Ascending aorta (tissue), 2 donors: ENCODE measurements at regions of chr1 and their contacts with region 1.

Region 1: DNA sequence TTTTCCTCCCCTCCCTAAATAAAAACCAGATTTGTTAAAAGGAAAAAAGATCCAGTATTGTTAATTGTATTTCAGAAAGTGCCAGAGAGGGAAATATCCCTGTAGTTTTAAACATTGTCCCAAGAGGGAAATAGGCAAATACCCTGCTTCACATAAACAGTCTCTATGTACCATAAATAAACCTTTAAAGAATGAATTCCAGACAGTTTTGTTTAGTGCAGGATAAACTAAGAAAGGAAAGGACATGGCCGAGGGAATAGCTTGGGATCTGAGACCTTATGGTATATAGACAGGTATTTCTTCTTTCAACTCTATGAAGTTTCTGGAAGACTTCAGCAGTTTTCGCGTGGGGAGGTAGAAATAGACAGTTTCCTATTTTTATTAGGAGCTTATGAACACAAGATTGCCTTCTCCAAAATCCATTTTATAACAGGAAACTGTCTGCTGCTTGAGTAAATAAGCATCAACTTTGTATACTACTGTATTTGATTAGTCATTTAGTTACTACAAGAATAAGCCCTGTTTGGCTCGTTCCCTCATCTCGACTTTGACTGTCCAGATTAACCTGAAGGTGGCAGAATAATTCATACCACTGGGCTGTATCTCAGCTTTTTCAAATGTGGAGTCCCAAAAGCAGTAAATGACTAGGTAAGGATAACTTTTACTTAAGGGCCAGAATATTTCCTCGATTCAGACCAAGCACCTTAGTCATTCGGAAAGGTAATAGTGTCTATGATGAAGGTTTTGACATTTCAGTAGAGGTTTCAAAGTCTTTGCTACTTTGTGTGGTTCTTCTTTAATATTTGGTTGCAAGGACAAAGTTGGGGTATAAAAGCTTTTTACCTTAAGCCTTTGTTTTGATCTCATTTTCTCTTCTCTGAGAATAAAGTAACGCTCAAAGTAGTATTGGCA is 177.5 kb downstream of the VPS13D start:
- DNase-seq: no peak
- H3K4me3 ChIP-seq: no peak overlapping the region
- H3K27ac ChIP-seq: peak overlapping the region; percentile 75 to 83
- H3K4me1 ChIP-seq: peaks cover 19 to 51% of the 10 kb centered on the region in 2 donors
- H3K27me3 ChIP-seq: no peaks in the 10 kb centered on the region
- CTCF ChIP-seq: peak; percentile 40 to 52 (median 49)

Region 2: DNA sequence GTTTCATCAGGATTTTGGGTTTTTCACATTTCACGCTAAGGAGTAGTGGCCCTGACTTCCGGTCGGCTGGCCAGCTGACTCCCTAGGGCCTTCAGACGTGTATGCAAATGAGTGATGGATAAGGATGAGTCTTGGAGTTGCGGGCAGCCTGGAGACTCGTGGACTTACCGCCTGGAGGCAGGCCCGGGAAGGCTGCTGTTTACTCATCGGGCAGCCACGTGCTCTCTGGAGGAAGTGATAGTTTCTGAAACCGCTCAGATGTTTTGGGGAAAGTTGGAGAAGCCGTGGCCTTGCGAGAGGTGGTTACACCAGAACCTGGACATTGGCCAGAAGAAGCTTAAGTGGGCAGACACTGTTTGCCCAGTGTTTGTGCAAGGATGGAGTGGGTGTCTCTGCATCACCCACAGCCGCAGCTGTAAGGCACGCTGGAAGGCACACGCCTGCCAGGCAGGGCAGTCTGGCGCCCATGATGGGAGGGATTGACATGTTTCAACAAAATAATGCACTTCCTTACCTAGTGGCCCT is 263.6 kb before region 1 on chr1:
- intact Hi-C with region 1: no loop called
- DNase-seq: peak; percentile 73 to 88
- H3K4me3 ChIP-seq: no peak overlapping the region
- H3K27ac ChIP-seq: peak overlapping the region; percentile 28 to 46
- H3K4me1 ChIP-seq: no peaks in the 10 kb centered on the region
- H3K27me3 ChIP-seq: no peaks in the 10 kb centered on the region
- CTCF ChIP-seq: no peak

Region 3: DNA sequence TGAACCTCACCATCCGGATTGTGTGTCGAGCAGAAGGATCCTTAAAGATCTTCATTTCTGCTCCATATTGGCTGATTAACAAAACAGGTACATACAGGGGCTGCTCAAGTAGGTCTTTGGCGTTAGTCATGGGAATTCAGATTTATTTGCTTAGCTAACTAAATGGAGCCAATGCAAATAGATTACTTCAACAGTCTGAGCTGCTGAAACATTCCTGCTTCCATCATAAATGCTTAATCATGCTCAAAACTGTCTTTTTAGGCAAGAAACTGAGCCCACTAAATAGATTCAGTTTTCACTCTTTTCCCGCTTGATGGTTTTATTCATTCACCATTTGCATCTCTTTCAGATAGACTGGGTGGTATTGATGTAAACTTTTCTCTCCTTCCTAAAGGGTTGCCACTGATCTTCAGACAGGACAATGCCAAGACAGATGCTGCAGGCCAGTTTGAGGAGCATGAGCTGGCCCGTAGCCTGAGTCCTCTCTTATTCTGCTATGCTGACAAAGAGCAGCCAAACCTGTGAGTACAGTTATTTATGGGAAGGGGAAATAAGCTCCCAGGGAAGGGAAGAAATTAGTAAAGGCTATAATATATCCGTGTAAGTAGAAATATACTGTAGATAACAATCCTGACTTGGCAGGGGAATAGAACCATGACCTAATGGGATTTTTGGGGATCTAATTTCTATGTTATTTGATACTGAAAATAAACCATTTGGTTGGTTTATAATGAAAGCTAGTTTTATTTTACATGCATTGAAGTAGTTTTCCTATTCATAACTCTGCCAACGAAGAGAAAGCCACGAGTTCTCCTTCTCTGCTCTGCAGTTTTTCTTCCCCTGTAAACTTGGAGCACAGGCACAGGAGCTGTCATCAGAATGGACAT is 51.1 kb before region 1 on chr1:
- intact Hi-C with region 1: loop called (anchors 5 kb)
- DNase-seq: no peak
- H3K4me3 ChIP-seq: peak overlapping the region in 1 of 2 donors; percentile 48
- H3K27ac ChIP-seq: peak overlapping the region; percentile 84
- H3K4me1 ChIP-seq: peaks cover 13 to 29% of the 10 kb centered on the region in 2 donors
- H3K27me3 ChIP-seq: no peaks in the 10 kb centered on the region
- CTCF ChIP-seq: no peak

Region 4: GRCh38 chr1:12448746-12449177 is 41.5 kb after region 1 on chr1:
- intact Hi-C with region 1: loop called (anchors 2 kb)
- DNase-seq: no peak
- H3K4me3 ChIP-seq: no peak overlapping the region
- H3K27ac ChIP-seq: peak overlapping the region; percentile 69 to 89
- H3K4me1 ChIP-seq: peaks cover 43 to 73% of the 10 kb centered on the region in 2 donors
- H3K27me3 ChIP-seq: no peaks in the 10 kb centered on the region
- CTCF ChIP-seq: no peak